GM10248 (cell line): ENCODE measurements at regions of chr3 and their contacts with region 1.

Region 1: DNA sequence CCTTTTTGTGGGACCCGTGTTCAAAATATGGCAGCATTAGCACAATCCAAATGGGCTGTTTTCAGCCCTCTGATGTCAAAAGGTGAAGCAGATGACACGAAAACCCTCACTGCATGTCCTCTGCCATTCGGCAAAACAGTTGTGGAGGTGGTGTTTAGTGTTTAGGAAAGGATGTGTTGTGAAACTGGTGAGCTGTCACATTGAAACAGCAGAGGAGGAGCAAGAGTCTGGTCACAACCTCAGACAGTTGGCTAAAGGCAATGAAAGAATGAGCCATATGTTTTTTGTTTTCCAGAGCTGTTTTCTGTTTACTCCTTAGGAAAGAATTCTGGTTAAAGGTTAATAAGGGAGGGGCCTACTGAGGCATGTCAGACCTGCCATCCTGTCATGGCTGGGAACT is 140.7 kb downstream of the VPS8 start:
- DNase-seq: no peak
- CTCF ChIP-seq: no peak

Region 2: GRCh38 chr3:184941408-184941807 is 11.3 kb before region 1 on chr3:
- CTCF ChIA-PET with region 1: interaction called, 10 read pairs
- POLR2A ChIA-PET with region 1: no interaction called
- DNase-seq: no peak
- CTCF ChIP-seq: no peak